Astrocyte of the cerebellum (primary cell): ENCODE measurements at regions of chr18 and their contacts with region 1.

Region 1: GRCh38 chr18:71020342-71021029 is 731.6 kb downstream of the SOCS6 start:
- DNase-seq: no peak
- H3K4me3 ChIP-seq: no peak overlapping the region
- CTCF ChIP-seq: no peak

Region 2: GRCh38 chr18:70966419-70966818 is 54.1 kb before region 1 on chr18:
- in situ Hi-C with region 1: no loop called
- DNase-seq: no peak
- H3K4me3 ChIP-seq: no peak overlapping the region
- CTCF ChIP-seq: no peak

Region 3: GRCh38 chr18:71116535-71116934 is 96.0 kb after region 1 on chr18:
- in situ Hi-C with region 1: loop called (anchors 5 kb)
- DNase-seq: no peak
- H3K4me3 ChIP-seq: no peak overlapping the region
- CTCF ChIP-seq: no peak